A549 (cell line): ENCODE measurements at regions of chr11 and their contacts with region 1.

Region 1: GRCh38 chr11:73307323-73308002 is 613 bp upstream of the ARHGEF17 start:
- DNase-seq: peak; percentile 98
- ATAC-seq: peak; percentile 67 to 77
- H3K4me3 ChIP-seq: peak overlapping the region; percentile 72
- H3K27ac ChIP-seq: peak overlapping the region; percentile 85 to 91
- H3K4me1 ChIP-seq: peaks cover 25% of the 10 kb centered on the region
- CTCF ChIP-seq: peak; percentile 92
- EP300 ChIP-seq: no peak
- POLR2A ChIP-seq: peak; percentile 59; the same call in 1 of the 2 replicates
- RAD21 ChIP-seq: peak; percentile 90 to 94

Region 2: DNA sequence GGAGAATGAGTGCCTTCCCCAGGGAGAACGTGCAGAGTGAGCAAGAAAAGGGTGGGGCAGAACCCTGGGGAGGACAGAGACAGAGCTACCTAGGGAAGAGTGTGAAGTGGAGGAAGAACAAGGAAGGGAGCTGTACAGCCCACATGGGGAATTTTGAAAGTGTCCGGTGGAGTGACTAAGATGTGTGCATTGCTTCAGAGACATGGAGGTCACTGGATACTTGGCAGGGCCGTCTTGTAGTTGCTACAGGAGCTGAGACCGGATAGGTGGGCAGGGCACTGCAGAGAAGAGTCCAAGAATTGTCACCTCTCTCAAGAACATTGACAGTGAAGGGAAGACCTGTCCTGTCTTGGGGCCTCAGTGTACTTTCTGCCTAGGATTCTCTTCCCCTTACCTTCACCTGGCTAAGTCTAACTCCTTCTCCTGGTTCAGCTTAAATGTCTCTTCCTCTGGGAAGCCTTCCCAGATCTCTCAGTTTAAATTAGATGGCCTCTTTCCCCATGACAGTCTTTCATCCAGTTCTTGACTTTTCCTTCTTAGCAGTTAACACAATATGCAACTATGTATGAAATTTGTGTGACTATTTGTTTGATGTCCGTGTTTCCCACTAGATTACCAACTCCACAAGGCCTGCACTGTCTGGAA is 44.5 kb before region 1 on chr11:
- CTCF ChIA-PET with region 1: interaction called, 18 read pairs
- POLR2A ChIA-PET with region 1: no interaction called
- DNase-seq: peak in 1 of 2 experiments; percentile 48
- ATAC-seq: peak; percentile 26 to 68; a peak in 3 of 6 replicates
- H3K4me3 ChIP-seq: no peak overlapping the region
- H3K27ac ChIP-seq: peak overlapping the region in 1 of 2 experiments; percentile 7; a peak in 1 of 6 replicates
- H3K4me1 ChIP-seq: peaks cover 14% of the 10 kb centered on the region
- CTCF ChIP-seq: no peak
- EP300 ChIP-seq: no peak
- POLR2A ChIP-seq: no peak
- RAD21 ChIP-seq: no peak

Region 3: DNA sequence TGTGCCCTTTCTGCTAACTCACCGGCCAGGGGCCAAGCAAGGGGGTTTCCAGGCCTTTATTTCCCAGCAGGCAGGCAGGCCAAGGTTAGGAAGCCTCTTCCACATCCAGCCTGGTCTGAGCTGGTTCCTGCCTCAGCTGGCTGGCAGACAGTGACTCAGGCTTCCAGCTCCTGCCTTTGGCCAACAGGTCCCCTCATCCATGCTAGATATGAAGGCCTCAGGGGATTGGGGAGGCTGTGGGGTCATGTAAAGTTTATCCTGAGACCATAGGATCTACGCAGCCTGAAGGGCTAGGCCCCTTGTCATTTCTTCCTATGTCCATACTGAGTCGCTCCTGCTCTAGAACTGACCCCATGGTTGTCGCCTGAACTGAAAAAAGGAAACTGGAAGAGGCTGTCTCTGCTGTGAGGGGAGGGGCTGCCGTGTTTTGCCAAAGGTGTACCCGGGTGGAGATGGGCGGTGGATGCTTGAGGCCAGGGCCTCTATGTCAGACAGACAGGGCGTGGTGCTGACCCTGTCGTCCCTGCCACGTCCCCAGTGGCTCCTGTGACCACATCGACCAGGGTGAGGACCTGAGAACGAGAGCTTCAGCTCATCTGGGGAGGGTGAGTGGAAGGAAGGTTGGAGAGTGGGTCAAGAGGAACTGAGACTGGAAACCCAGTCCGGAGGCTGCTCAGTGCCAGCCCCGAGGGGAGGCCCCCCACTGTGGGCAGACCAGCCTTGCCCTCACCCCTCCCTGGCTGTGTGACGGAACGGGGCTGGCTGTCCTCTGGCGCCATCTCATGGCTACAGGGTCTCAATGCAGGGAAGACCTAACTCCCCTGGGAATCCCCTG is 18.4 kb before region 1 on chr11:
- CTCF ChIA-PET with region 1: interaction called, 185 read pairs
- POLR2A ChIA-PET with region 1: interaction called, 7 read pairs
- DNase-seq: peak; percentile 86 to 91
- ATAC-seq: peak; percentile 72 to 84
- H3K4me3 ChIP-seq: peak overlapping the region; percentile 20; the same call in 1 of the 3 replicates
- H3K27ac ChIP-seq: peak overlapping the region; percentile 80 to 90
- H3K4me1 ChIP-seq: peaks cover 36% of the 10 kb centered on the region
- CTCF ChIP-seq: peak; percentile 96
- EP300 ChIP-seq: no peak
- POLR2A ChIP-seq: no peak
- RAD21 ChIP-seq: peak; percentile 98

Region 4: DNA sequence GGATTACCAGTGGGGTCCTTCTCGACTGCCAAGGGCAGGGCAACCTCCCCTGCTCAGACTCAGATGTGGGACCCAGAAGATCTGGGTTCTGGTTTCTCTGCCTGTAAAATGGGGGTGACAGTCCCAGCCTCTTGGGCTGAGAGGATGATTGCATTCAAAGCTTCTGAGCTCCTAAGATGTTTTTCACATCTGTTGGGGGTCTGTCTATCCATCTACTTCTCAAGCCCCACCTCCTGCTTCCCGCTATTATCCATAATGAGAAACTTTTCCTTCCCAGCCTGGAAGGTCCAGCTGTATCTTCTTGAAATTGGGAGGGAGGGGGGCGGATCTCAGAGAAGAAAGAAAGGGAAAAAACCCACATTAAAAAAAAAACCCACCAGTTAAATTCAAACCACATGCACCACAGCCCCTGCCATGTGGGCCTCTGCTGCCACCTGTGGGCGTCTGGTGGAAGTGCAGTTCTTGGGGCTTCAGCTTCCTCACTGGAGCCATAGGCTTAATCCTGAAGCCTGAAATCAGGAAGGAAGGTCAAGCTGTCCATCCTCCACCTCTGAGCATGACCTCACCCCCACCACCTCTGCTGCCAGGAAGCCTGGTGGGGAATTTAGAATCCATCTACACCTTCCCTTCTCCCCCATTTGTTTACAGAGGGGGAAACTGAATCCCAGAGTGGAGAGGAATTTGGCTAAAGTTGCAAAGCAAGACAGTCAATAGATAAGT is 27.9 kb after region 1 on chr11:
- CTCF ChIA-PET with region 1: interaction called, 527 read pairs
- POLR2A ChIA-PET with region 1: interaction called, 39 read pairs
- DNase-seq: peak; percentile 73 to 93
- ATAC-seq: peak; percentile 72 to 83
- H3K4me3 ChIP-seq: no peak overlapping the region
- H3K27ac ChIP-seq: peak overlapping the region; percentile 62 to 80
- H3K4me1 ChIP-seq: peaks cover 38% of the 10 kb centered on the region
- CTCF ChIP-seq: peak; percentile 97
- EP300 ChIP-seq: no peak
- POLR2A ChIP-seq: no peak
- RAD21 ChIP-seq: peak; percentile 93 to 95

Region 5: GRCh38 chr11:73360336-73361013 is 53.0 kb after region 1 on chr11:
- CTCF ChIA-PET with region 1: interaction called, 20 read pairs
- POLR2A ChIA-PET with region 1: interaction called, 5 read pairs
- DNase-seq: peak; percentile 43 to 75
- ATAC-seq: peak; percentile 72 to 86
- H3K4me3 ChIP-seq: no peak overlapping the region
- H3K27ac ChIP-seq: no peak overlapping the region
- H3K4me1 ChIP-seq: no peaks in the 10 kb centered on the region
- CTCF ChIP-seq: peak; percentile 49
- EP300 ChIP-seq: no peak
- POLR2A ChIP-seq: no peak
- RAD21 ChIP-seq: peak; percentile 42 to 63; a peak in 4 of 5 replicates

Region 6: GRCh38 chr11:73384872-73385689 is 77.6 kb after region 1 on chr11:
- CTCF ChIA-PET with region 1: interaction called, 20 read pairs
- POLR2A ChIA-PET with region 1: interaction called, 9 read pairs
- DNase-seq: no peak
- ATAC-seq: peak in 1 of 2 experiments; percentile 9; a peak in 3 of 6 replicates
- H3K4me3 ChIP-seq: no peak overlapping the region
- H3K27ac ChIP-seq: peak overlapping the region; percentile 43 to 80; a peak in 5 of 6 replicates
- H3K4me1 ChIP-seq: peaks cover 76% of the 10 kb centered on the region
- CTCF ChIP-seq: no peak
- EP300 ChIP-seq: no peak
- POLR2A ChIP-seq: no peak
- RAD21 ChIP-seq: no peak

Region 7: DNA sequence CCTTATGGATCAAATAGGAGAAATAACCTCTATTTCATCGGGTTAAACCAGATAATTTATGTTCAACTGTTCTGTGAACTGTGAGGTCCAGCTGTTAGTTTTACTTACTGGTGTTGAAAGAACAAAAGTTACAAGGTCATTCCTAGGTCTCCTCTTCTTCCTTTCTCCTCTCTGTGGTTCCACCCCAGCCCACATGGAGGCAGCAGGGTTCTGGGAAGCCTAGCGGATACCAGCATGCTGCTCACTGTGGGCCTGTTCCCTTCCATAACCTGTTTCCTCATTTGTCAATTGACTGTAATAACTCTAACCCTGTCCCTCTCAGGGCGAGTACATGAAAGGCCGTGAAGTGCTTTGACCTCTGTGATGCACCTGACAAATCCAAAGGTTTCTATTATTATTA is 96.6 kb after region 1 on chr11:
- CTCF ChIA-PET with region 1: interaction called, 33 read pairs
- POLR2A ChIA-PET with region 1: interaction called, 6 read pairs
- DNase-seq: peak; percentile 59 to 63
- ATAC-seq: peak; percentile 74 to 88
- H3K4me3 ChIP-seq: no peak overlapping the region
- H3K27ac ChIP-seq: no peak overlapping the region
- H3K4me1 ChIP-seq: no peaks in the 10 kb centered on the region
- CTCF ChIP-seq: peak; percentile 45
- EP300 ChIP-seq: no peak
- POLR2A ChIP-seq: no peak
- RAD21 ChIP-seq: peak; percentile 48 to 73